ENCODE measurements at regions of chr1 and their contacts with region 1.

Region 1: GRCh38 chr1:67214420-67215174 is 48.3 kb downstream of the IL23R start:
- DNase-seq: peak; percentile 22 to 70
- ATAC-seq: peak; percentile 59 to 77 (median 71)
- H3K4me3 ChIP-seq: no peak overlapping the region
- H3K4me3 Mint-ChIP-seq: no peak overlapping the region
- H3K27ac ChIP-seq: no peak overlapping the region
- H3K27ac Mint-ChIP-seq: peak overlapping the region; percentile 14 to 60
- H3K4me1 ChIP-seq: peaks cover 11% of the 10 kb centered on the region
- H3K4me1 Mint-ChIP-seq: peaks cover 15 to 25% of the 10 kb centered on the region in 2 donors
- H3K27me3 ChIP-seq: no peaks in the 10 kb centered on the region
- H3K27me3 Mint-ChIP-seq: no peaks in the 10 kb centered on the region
- CTCF ChIP-seq: peak; percentile 84

Region 2: DNA sequence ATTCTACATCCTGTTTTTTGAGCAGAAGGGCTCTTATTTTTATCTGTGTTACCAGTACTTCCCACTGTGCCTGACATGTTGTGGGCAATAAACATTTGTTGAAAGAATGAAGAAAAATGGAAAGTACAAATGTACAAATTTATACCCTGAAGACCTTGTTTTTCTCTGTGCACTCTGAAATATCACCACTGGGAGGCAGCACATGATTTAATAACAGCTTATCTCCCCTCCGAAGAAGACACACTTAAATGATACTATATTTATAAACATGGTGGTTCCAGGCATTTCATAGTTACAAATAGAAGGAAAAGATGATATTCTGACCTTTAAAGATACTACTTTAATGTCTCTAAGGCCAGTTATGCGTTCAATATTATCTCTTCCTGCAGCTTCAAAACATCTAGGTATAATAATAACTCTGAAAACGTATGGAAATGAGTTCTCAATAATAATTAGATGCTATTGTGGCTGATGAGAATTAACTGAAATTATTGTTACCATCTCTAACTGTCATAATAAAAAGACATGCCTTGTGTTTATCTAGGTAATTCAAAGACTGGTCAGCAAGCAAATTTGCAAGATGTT is 449.5 kb before region 1 on chr1:
- intact Hi-C with region 1: loop called (anchors 2 kb)
- DNase-seq: peak in 1 of 2 donors; percentile 78
- ATAC-seq: peak in 2 of 3 donors; percentile 47 to 62
- H3K4me3 ChIP-seq: no peak overlapping the region
- H3K4me3 Mint-ChIP-seq: no peak overlapping the region
- H3K27ac ChIP-seq: no peak overlapping the region
- H3K27ac Mint-ChIP-seq: no peak overlapping the region
- H3K4me1 ChIP-seq: no peaks in the 10 kb centered on the region
- H3K4me1 Mint-ChIP-seq: no peaks in the 10 kb centered on the region
- H3K27me3 ChIP-seq: no peaks in the 10 kb centered on the region
- H3K27me3 Mint-ChIP-seq: peaks cover 0 to 4% of the 10 kb centered on the region in 2 donors
- CTCF ChIP-seq: peak; percentile 76

Region 3: DNA sequence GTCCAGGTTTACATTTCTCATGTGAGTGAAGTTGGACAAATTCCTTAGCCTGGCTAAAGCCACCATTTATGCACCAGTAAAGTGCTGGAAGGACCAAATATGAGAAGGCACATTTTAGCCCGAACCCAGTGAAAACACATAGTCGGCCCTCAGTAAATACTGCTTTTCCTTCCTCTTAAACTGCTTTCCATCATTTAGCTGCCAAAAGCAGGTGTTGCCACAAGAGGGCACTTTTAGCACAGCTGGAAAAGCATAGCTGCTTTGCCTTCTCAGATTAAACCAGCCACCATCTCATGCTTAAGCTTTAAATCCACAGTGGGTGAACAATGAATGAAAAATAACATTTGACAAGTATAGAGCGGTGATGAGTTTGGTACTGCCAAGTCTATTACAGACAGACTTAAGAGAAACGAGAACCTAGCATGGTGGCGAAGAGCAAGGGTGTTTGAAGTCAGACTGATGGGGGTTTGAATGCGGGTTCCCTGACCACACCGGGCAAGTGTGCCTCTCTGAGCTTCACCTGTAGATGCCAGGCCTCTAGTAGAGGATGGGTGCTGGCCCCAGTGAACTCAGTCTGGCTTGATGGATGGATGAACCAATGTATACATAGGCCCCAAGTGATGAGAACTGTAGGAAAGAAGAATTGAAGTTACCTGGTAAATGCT is 218.4 kb before region 1 on chr1:
- intact Hi-C with region 1: loop called (anchors 1 kb)
- DNase-seq: peak; percentile 23 to 78
- ATAC-seq: peak; percentile 56 to 77 (median 74)
- H3K4me3 ChIP-seq: no peak overlapping the region
- H3K4me3 Mint-ChIP-seq: no peak overlapping the region
- H3K27ac ChIP-seq: no peak overlapping the region
- H3K27ac Mint-ChIP-seq: peak overlapping the region; percentile 21 to 42
- H3K4me1 ChIP-seq: no peaks in the 10 kb centered on the region
- H3K4me1 Mint-ChIP-seq: peaks cover 6 to 14% of the 10 kb centered on the region in 2 donors
- H3K27me3 ChIP-seq: no peaks in the 10 kb centered on the region
- H3K27me3 Mint-ChIP-seq: no peaks in the 10 kb centered on the region
- CTCF ChIP-seq: peak; percentile 49

Region 4: GRCh38 chr1:67572271-67573221 is 357.9 kb after region 1 on chr1:
- intact Hi-C with region 1: no loop called
- DNase-seq: no peak
- ATAC-seq: no peak
- H3K4me3 ChIP-seq: no peak overlapping the region
- H3K4me3 Mint-ChIP-seq: no peak overlapping the region
- H3K27ac ChIP-seq: no peak overlapping the region
- H3K27ac Mint-ChIP-seq: no peak overlapping the region
- H3K4me1 ChIP-seq: no peaks in the 10 kb centered on the region
- H3K4me1 Mint-ChIP-seq: no peaks in the 10 kb centered on the region
- H3K27me3 ChIP-seq: no peaks in the 10 kb centered on the region
- H3K27me3 Mint-ChIP-seq: peaks cover 0 to 3% of the 10 kb centered on the region in 2 donors
- CTCF ChIP-seq: no peak